H1 (cell line): ENCODE measurements at regions of chr22 and their contacts with region 1.

Region 1: DNA sequence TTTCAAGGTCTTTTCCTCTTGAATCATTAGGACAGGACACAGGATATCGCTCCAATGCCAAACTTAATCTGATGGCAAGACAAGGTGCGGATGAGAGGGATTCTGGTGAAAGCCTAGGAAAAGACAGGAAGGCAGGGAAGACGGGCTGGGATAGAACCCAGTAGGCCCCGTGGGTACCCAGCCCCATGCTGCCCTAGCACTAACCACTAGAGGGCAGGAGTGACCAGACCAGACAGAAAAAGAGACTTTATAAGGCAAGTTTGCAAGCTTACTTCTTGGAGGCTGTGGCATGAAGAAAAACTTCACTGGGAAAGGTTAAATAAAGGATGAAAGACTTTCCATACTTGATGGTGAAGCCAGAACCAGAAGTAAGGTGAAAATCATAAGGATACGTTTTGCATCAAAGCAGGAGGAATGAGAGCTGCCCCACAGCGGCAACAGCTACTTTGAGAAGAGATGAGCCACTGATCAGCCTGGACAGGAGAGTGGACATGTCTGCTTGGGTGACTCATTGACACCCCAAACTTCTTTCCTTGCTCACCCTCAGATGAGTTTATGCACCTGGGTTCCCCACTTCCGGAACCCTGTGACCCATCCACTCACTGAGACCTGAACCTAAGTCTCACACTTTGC is 39.8 kb downstream of the SYN3 start:
- DNase-seq: peak; percentile 34 to 93
- H3K4me3 ChIP-seq: no peak overlapping the region
- H3K27ac ChIP-seq: no peak overlapping the region
- H3K4me1 ChIP-seq: peaks cover 0 to 2% (median 0%) of the 10 kb centered on the region in 4 experiments; a peak in 2 of 7 replicates
- H3K27me3 ChIP-seq: no peaks in the 10 kb centered on the region
- CTCF ChIP-seq: peak; percentile 88 to 92 (median 92)
- EP300 ChIP-seq: no peak
- POLR2A ChIP-seq: no peak
- RAD21 ChIP-seq: peak; percentile 87 to 90

Region 2: DNA sequence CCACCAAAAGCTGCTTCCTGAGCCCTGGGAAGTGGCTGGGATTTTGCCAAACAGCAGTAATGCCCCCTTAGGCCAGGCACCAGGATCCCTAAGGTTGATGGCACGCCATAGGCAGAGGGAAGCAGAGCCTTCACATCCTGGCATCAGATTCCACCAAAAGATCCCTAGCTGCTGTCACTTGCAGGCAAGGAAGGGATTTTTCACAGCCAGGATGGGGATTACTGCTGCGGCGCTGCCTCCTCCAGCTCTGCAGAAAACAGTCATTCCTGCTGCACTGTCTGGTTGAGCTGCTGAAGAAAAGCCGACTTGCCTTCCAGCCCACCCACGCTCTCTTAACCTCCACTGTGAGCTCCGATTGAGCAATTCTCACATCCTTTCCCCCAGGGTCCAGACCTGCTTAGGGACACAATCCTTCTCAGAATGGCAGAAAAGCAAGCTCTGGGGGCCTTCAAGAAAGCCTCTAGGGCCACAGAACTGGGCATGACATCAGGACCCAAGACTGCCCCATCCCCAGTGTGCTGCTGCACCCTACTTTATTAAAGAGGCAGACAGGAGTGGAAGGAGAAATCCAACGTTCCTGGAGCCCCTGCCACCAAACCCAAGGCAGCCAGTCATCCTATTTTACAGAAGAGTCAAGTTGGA is 19.9 kb after region 1 on chr22:
- CTCF ChIA-PET with region 1: interaction called, 131 read pairs
- POLR2A ChIA-PET with region 1: interaction called, 5 read pairs
- DNase-seq: no peak
- H3K4me3 ChIP-seq: no peak overlapping the region
- H3K27ac ChIP-seq: no peak overlapping the region
- H3K4me1 ChIP-seq: peaks cover 6 to 20% (median 13%) of the 10 kb centered on the region in 4 experiments; a peak in 6 of 7 replicates
- H3K27me3 ChIP-seq: peaks cover 0 to 2% (median 0%) of the 10 kb centered on the region in 4 experiments; a peak in 1 of 7 replicates
- CTCF ChIP-seq: no peak
- EP300 ChIP-seq: no peak
- POLR2A ChIP-seq: no peak
- RAD21 ChIP-seq: no peak

Region 3: DNA sequence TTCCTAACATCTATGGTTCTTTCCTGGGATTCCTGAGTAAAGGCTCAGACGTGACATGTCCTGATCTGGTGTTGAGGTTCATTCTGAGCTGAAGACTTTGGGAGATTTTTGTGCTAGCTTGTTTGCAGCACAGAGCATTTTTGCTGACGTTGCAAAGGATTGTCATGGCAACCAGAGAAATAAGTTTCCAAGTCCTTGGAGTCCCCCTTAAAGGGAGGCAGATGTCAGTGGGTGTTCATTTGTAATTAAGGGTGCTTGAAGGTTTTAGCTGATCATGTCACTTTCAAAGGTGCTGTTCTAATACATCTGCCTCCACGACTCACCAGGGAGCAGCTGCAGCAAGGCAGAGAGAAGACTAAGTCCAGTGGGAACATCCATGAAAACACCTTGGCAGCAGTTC is 45.3 kb after region 1 on chr22:
- CTCF ChIA-PET with region 1: interaction called, 71 read pairs
- POLR2A ChIA-PET with region 1: interaction called, 7 read pairs
- DNase-seq: no peak
- H3K4me3 ChIP-seq: no peak overlapping the region
- H3K27ac ChIP-seq: no peak overlapping the region
- H3K4me1 ChIP-seq: peaks cover 0 to 21% (median 14%) of the 10 kb centered on the region in 4 experiments; a peak in 5 of 7 replicates
- H3K27me3 ChIP-seq: no peaks in the 10 kb centered on the region; a peak in 1 of 7 replicates
- CTCF ChIP-seq: no peak
- EP300 ChIP-seq: no peak
- POLR2A ChIP-seq: no peak
- RAD21 ChIP-seq: no peak

Region 4: GRCh38 chr22:33126881-33127280 is 108.5 kb after region 1 on chr22:
- CTCF ChIA-PET with region 1: interaction called, 37 read pairs
- POLR2A ChIA-PET with region 1: interaction called, 5 read pairs
- DNase-seq: peak in 1 of 2 experiments; percentile 13
- H3K4me3 ChIP-seq: no peak overlapping the region
- H3K27ac ChIP-seq: no peak overlapping the region
- H3K4me1 ChIP-seq: no peaks in the 10 kb centered on the region
- H3K27me3 ChIP-seq: peaks cover 0 to 3% (median 0%) of the 10 kb centered on the region in 4 experiments; a peak in 1 of 7 replicates
- CTCF ChIP-seq: peak in 2 of 3 experiments; percentile 72 to 79; a peak in 3 of 4 replicates
- EP300 ChIP-seq: no peak
- POLR2A ChIP-seq: no peak
- RAD21 ChIP-seq: peak; percentile 96 to 97

Region 5: GRCh38 chr22:33209930-33210784 is 191.8 kb after region 1 on chr22:
- CTCF ChIA-PET with region 1: interaction called, 11 read pairs
- POLR2A ChIA-PET with region 1: no interaction called
- DNase-seq: peak in 1 of 2 experiments; percentile 66
- H3K4me3 ChIP-seq: no peak overlapping the region
- H3K27ac ChIP-seq: no peak overlapping the region
- H3K4me1 ChIP-seq: no peaks in the 10 kb centered on the region
- H3K27me3 ChIP-seq: peaks cover 0 to 2% (median 0%) of the 10 kb centered on the region in 4 experiments; a peak in 3 of 7 replicates
- CTCF ChIP-seq: peak; percentile 22 to 80 (median 72)
- EP300 ChIP-seq: no peak
- POLR2A ChIP-seq: no peak
- RAD21 ChIP-seq: peak; percentile 88 to 91